ENCODE measurements at regions of chr7 and their contacts with region 1.

Region 1: DNA sequence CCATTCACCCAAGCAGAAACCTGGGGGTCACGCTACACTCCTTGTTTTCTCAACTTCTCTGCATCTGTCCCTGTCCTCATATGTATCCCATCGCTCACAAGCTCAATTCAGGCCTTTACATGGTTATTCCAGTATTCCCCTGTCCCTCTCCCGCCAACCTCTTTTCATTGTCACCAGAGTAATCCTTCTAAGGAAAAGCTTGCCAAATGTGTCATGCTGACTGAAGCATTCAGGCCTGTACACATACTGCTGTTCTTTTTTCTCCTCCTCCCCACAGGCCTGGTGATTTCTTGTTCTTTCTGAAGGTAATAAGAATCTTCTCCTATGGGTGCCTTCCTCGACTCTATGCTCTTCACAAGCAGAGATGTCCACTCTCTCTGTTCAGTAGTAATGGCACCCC is 282.2 kb downstream of the PHTF2 start:
- DNase-seq: no peak
- H3K4me3 ChIP-seq: no peak overlapping the region
- H3K4me3 Mint-ChIP-seq: no peak overlapping the region
- H3K27ac Mint-ChIP-seq: no peak overlapping the region
- H3K4me1 ChIP-seq: peaks cover 14% of the 10 kb centered on the region; the same call in 1 of the 2 replicates
- H3K4me1 Mint-ChIP-seq: no peaks in the 10 kb centered on the region
- H3K27me3 ChIP-seq: no peaks in the 10 kb centered on the region
- H3K27me3 Mint-ChIP-seq: peaks cover 5% of the 10 kb centered on the region
- CTCF ChIP-seq: no peak

Region 2: GRCh38 chr7:77950548-77950947 is 130.3 kb before region 1 on chr7:
- CTCF ChIA-PET with region 1: no interaction called
- POLR2A ChIA-PET with region 1: no interaction called
- intact Hi-C with region 1: loop called (anchors 1 kb)
- DNase-seq: no peak
- H3K4me3 ChIP-seq: no peak overlapping the region
- H3K4me3 Mint-ChIP-seq: no peak overlapping the region
- H3K27ac Mint-ChIP-seq: no peak overlapping the region
- H3K4me1 ChIP-seq: no peaks in the 10 kb centered on the region
- H3K4me1 Mint-ChIP-seq: no peaks in the 10 kb centered on the region
- H3K27me3 ChIP-seq: no peaks in the 10 kb centered on the region
- H3K27me3 Mint-ChIP-seq: no peaks in the 10 kb centered on the region
- CTCF ChIP-seq: no peak

Region 3: DNA sequence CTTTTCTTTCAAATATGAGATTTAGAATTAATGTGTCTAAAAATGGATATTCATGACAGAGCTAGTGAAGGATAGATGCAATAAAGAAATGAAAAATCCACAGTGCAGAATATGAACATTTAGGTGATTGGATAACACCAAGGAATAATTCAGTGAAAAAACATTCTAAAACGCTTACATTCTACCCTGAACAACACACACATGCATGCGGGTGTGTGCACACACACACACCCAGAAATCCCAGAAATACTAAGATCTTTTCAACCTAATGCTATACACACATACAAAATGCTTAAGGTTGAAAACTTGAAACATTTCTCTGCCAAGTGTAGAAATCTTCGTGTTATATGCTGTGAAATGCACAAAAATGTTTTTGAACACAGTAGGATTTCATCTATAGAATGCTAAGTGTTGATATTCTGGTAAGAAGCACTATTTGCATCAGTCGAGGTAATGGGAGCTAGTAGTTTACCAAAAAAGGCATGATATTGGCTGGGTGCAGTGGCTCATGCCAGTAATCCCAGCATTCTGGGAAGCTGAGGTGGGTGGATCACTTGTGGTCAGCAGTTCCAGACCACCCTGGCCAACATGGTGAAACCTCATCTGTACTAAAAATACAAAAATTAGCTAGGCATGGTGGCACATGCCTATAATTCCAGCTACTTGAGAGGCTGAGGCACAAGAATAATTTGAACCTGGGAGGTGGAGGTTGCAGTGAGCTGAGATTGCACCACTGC is 318.4 kb after region 1 on chr7:
- CTCF ChIA-PET with region 1: no interaction called
- POLR2A ChIA-PET with region 1: no interaction called
- intact Hi-C with region 1: no loop called
- DNase-seq: no peak
- H3K4me3 ChIP-seq: no peak overlapping the region
- H3K4me3 Mint-ChIP-seq: no peak overlapping the region
- H3K27ac Mint-ChIP-seq: no peak overlapping the region
- H3K4me1 ChIP-seq: no peaks in the 10 kb centered on the region
- H3K4me1 Mint-ChIP-seq: no peaks in the 10 kb centered on the region
- H3K27me3 ChIP-seq: no peaks in the 10 kb centered on the region; the same call in 1 of the 2 replicates
- H3K27me3 Mint-ChIP-seq: peaks cover 20% of the 10 kb centered on the region
- CTCF ChIP-seq: no peak